HEK293 (cell line): ENCODE measurements at regions of chr17 and their contacts with region 1.

Region 1: DNA sequence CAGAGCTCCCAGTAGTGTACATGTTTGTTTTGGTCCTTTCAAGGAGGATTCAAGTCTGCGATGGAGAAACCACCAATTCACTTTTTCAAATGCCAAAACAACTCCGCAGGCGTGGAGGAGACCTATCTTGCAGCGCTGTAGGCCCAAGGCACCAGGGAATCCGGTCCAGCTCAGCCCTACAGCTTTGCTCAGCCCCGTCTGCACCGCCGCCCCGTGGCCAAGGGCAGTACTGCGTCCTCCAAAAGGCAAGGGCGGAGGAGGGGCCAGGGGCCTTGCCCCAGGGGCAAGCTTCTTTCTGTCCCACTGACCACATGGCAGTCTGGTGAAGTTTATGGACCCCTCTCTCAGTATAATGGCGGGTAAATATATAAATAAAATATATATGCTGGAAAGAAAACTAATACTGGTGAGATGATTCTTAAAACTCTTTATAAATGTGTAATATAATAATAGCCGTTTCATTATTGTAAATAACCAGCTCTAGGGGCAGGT is 709 bp upstream of the CD300LG start:
- H3K4me3 ChIP-seq: no peak overlapping the region
- H3K27ac ChIP-seq: no peak overlapping the region
- H3K4me1 ChIP-seq: peaks cover under 1% of the 10 kb centered on the region
- CTCF ChIP-seq: peak; percentile 80

Region 2: DNA sequence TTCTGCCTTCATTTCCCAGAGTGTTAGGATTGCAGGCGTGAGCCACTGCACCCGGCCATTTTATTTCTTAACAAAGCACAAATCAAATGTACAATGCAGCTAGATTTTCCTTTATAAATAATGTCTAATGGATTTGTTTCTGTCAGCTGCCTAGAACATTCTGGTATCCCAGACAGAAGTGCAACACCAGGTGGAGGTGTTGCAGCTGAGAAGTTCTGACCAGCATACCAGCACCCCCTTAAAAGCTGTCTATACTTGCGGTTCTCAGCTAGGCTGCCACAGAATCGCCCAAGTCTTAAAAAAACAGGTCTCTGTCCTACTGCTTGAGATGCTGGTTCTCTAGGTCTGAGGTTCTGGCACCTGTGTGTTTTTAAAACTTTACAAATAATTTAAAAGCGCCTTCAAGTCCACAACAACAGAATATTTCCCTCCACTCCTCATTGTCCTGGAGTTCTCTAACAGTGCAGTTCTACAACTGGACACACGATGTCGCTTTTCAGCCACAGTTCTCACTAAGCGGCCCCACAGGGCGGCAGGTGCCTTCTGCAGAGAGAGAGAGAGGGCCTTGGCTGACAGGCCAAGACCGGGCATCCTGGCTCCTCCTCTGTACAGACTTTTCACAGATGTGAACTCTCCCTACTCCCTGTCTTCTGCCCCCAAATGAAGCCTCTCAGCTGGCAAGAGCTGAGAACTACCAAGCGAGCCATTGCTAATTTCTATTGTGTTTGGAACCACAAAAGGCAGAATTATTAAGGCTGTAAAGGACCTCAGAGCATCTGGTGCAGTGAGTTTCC is 152.0 kb before region 1 on chr17:
- CTCF ChIA-PET with region 1: interaction called, 12 read pairs
- POLR2A ChIA-PET with region 1: interaction called, 8 read pairs
- H3K4me3 ChIP-seq: no peak overlapping the region
- H3K27ac ChIP-seq: no peak overlapping the region
- H3K4me1 ChIP-seq: no peaks in the 10 kb centered on the region
- CTCF ChIP-seq: peak; percentile 90

Region 3: GRCh38 chr17:43766413-43767052 is 79.7 kb before region 1 on chr17:
- CTCF ChIA-PET with region 1: interaction called, 28 read pairs
- POLR2A ChIA-PET with region 1: no interaction called
- H3K4me3 ChIP-seq: no peak overlapping the region
- H3K27ac ChIP-seq: no peak overlapping the region
- H3K4me1 ChIP-seq: no peaks in the 10 kb centered on the region
- CTCF ChIP-seq: peak; percentile 32; the same call in 1 of the 2 replicates

Region 4: DNA sequence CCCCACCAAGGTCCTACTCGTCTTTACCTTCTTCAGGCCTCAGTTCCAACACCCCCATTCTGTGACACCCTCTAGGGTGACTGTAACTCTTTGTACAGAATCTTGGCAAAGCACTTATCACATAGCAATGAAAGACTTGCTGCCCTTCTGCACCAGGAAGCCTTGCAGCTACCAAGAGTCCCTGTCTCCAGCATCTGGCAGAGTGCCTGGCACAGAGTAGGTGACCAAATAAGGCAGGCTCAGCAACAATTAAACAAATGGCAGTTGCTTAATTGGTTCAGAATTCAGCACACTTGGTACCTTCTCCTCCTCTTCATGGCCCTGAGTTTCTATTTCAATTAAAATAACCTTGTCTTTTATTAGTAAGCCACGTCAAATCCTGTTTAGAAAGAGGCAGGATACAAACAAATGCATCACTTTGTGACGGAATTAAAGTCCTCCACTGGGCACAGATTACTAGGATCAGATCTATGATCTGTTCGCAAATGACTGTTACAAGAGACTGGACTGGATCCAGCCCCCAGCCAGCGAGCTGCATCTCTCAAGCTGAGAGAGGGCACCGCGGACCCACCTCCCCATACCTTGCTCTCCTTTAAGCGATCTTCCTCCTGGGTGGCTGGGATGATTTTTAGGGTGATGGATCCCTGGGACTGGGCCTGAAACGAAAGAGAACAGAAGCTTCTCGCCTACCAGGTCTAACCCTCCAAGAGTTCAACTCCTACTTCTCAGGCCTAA is 22.8 kb before region 1 on chr17:
- CTCF ChIA-PET with region 1: interaction called, 21 read pairs
- POLR2A ChIA-PET with region 1: interaction called, 3 read pairs
- H3K4me3 ChIP-seq: no peak overlapping the region
- H3K27ac ChIP-seq: no peak overlapping the region
- H3K4me1 ChIP-seq: no peaks in the 10 kb centered on the region
- CTCF ChIP-seq: no peak

Region 5: GRCh38 chr17:43861024-43861621 is 14.9 kb after region 1 on chr17:
- CTCF ChIA-PET with region 1: interaction called, 56 read pairs
- POLR2A ChIA-PET with region 1: no interaction called
- H3K4me3 ChIP-seq: no peak overlapping the region
- H3K27ac ChIP-seq: no peak overlapping the region
- H3K4me1 ChIP-seq: no peaks in the 10 kb centered on the region
- CTCF ChIP-seq: no peak